ENCODE measurements at regions of chr7 and their contacts with region 1.

Region 1: DNA sequence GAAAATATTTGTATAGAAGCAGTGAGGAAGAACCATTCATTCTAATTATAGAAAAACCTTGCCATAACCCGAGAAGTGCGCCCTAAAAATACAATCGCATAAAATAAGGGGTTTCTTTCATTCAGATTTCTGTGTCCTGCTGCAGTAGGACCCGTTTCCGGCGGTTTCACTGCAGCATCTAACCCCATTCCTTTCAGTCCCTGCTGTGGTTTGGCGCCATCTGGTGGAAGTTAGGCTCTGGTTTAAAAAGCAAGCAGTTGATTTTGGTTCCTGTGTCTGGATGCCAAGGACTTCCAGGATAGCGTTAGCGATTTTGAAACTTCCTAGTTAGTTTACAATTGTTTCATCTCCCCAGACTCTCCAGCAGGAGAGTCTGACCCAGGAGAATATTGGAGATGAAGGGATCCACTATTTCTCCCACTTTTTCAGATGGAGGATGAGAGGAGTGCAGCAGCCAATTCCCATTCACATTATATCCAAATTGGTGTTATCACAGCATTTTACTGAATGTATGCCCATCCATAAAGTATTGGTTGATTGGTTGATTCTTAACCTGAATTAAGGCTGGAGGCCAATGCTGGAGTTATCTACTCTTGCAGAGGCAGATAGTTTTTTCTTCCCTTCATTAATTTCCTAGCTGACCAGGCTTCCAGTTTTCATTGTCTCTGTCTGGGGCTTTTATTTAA is 128.8 kb upstream of the CACNA2D1 start:
- DNase-seq: peak; percentile 89
- H3K4me3 ChIP-seq: peak overlapping the region; percentile 18 to 27; a peak in 2 of 4 replicates
- H3K27ac ChIP-seq: peak overlapping the region in 1 of 2 experiments; percentile 25; a peak in 1 of 4 replicates
- H3K4me1 ChIP-seq: peaks cover 4 to 11% of the 10 kb centered on the region in 2 experiments; a peak in 2 of 4 replicates
- H3K27me3 ChIP-seq: no peaks in the 10 kb centered on the region
- CTCF ChIP-seq: peak; percentile 100
- EP300 ChIP-seq: peak in 1 of 2 experiments; percentile 52; a peak in 2 of 4 replicates
- RAD21 ChIP-seq: peak; percentile 100

Region 2: GRCh38 chr7:82044497-82045080 is 527.7 kb before region 1 on chr7:
- CTCF ChIA-PET with region 1: interaction called, 29 read pairs
- POLR2A ChIA-PET with region 1: no interaction called
- DNase-seq: peak; percentile 16
- H3K4me3 ChIP-seq: no peak overlapping the region
- H3K27ac ChIP-seq: no peak overlapping the region
- H3K4me1 ChIP-seq: peaks cover 14 to 29% of the 10 kb centered on the region in 2 experiments; a peak in 3 of 4 replicates
- H3K27me3 ChIP-seq: no peaks in the 10 kb centered on the region
- CTCF ChIP-seq: peak; percentile 89
- EP300 ChIP-seq: 0 out of 4 replicates have a peak, but pooled peaks of 1 of the 2 experiments have one; percentile 16
- RAD21 ChIP-seq: peak; percentile 97

Region 3: GRCh38 chr7:82234457-82235049 is 337.8 kb before region 1 on chr7:
- CTCF ChIA-PET with region 1: interaction called, 24 read pairs
- POLR2A ChIA-PET with region 1: no interaction called
- DNase-seq: peak; percentile 22
- H3K4me3 ChIP-seq: no peak overlapping the region
- H3K27ac ChIP-seq: peak overlapping the region in 1 of 2 experiments; percentile 69; a peak in 2 of 4 replicates
- H3K4me1 ChIP-seq: peaks cover 13 to 30% of the 10 kb centered on the region in 2 experiments; a peak in 3 of 4 replicates
- H3K27me3 ChIP-seq: no peaks in the 10 kb centered on the region
- CTCF ChIP-seq: peak; percentile 97
- EP300 ChIP-seq: peak in 1 of 2 experiments; percentile 9; a peak in 1 of 4 replicates
- RAD21 ChIP-seq: peak; percentile 91

Region 4: GRCh38 chr7:82443547-82444219 is 128.7 kb before region 1 on chr7 and contains the start of gene CACNA2D1:
- CTCF ChIA-PET with region 1: interaction called, 31 read pairs
- POLR2A ChIA-PET with region 1: no interaction called
- DNase-seq: peak; percentile 97
- H3K4me3 ChIP-seq: peak within 1 kb of the TSS; percentile 89 to 100
- H3K27ac ChIP-seq: peak within 1 kb of the TSS; percentile 81 to 99
- H3K4me1 ChIP-seq: peaks cover 8 to 33% of the 10 kb centered on the region in 2 experiments; a peak in 3 of 4 replicates
- H3K27me3 ChIP-seq: no peaks in the 10 kb centered on the region
- CTCF ChIP-seq: no peak
- EP300 ChIP-seq: no peak
- RAD21 ChIP-seq: no peak
- polyA plus RNA-seq, gene CACNA2D1: 3.4 and 4.8 TPM in 2 replicates

Region 5: DNA sequence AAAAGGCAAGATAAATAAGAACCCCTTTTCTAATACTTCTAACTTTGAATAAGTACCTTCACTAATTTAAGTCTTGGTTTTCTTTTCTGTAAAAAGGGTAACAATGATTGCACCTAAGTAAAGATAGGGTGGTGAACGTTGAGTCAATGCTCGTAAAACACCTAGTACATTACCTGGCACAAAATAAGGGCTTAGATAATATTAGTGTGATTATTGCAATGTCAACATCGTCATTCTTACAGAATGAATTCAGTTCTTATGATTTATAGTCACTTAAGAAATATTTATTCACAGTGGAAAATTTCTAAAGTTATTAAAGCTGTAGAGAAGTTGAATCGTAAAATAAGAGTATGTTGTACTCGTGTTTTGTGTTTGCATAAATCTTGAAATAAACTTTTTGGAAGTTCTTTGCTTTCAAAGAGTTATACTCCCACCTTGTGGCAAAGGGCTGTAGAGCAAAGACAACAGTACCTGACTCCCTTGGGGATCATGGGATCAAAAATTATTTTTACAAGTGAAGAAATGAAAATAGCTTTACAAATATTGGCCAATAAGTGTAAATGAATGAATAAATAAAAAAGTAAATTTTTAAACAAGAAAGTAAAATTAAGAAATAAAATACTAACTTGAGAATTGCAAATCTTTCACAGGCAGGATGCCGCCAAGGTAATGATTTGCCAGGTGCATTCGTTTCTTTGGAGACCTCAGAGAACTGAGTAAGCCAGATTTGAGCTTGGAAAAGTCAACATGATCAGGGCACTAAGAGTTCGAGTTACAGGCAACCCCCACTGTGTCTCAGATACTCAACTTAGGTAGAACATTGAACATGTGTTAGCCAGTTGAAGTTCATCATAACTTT is 157.1 kb after region 1 on chr7:
- CTCF ChIA-PET with region 1: interaction called, 21 read pairs
- POLR2A ChIA-PET with region 1: no interaction called
- DNase-seq: peak; percentile 52
- H3K4me3 ChIP-seq: no peak overlapping the region; a peak in 1 of 4 replicates
- H3K27ac ChIP-seq: no peak overlapping the region
- H3K4me1 ChIP-seq: peaks cover 0 to 3% of the 10 kb centered on the region in 2 experiments; a peak in 1 of 4 replicates
- H3K27me3 ChIP-seq: no peaks in the 10 kb centered on the region
- CTCF ChIP-seq: peak; percentile 99
- EP300 ChIP-seq: no peak
- RAD21 ChIP-seq: peak; percentile 93

Measured in SK-N-SH (cell line).